Calu3 (cell line): ENCODE measurements at regions of chr3 and their contacts with region 1.

Region 1: DNA sequence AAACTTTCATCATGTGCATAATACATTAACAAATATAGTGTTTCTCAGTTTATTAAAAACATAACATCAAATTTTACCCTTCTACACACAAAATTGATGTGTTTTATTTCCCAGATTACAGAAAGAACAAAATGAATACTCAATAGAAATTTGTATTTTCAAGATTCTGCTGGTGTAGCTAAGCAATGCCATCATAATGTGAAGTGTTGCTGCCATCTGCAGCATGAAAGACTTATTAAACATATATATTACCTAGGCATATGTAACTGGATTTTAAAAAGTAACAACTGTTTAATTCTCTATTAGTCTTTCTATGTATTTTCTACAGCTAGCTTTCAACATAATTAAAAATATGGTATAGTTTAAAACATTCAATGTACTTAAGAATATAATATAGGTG is 27.5 kb downstream of the PLSCR5 start:
- DNase-seq: peak; percentile 49
- H3K4me3 Mint-ChIP-seq: no peak overlapping the region
- H3K27ac Mint-ChIP-seq: peak overlapping the region; percentile 47
- H3K4me1 Mint-ChIP-seq: peaks cover 51% of the 10 kb centered on the region
- H3K27me3 Mint-ChIP-seq: no peaks in the 10 kb centered on the region
- CTCF ChIP-seq: peak; percentile 57

Region 2: DNA sequence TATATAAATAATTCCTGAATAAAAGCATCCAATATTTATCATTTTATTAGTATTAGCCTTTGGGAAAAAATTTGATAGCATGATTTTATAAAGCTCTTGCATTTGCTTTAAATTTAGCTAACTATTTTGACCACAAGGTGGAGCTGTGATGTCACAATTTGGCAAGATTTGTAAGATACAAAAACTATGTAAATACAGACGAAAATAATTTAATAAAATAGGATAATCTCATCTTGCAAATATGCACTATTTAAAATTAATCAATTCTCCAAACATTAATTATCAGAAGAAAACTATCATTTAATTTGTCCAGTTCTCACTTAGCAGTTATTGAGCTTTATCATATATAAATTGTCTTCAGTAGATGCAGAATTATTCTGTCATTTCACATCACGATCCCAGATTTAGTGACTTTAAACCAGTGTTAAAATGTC is 512.1 kb before region 1 on chr3:
- CTCF ChIA-PET with region 1: interaction called, 3 read pairs
- intact Hi-C with region 1: loop called (anchors 5 kb)
- DNase-seq: peak; percentile 62
- H3K4me3 Mint-ChIP-seq: no peak overlapping the region
- H3K27ac Mint-ChIP-seq: no peak overlapping the region
- H3K4me1 Mint-ChIP-seq: peaks cover 8% of the 10 kb centered on the region
- H3K27me3 Mint-ChIP-seq: no peaks in the 10 kb centered on the region
- CTCF ChIP-seq: peak; percentile 74

Region 3: DNA sequence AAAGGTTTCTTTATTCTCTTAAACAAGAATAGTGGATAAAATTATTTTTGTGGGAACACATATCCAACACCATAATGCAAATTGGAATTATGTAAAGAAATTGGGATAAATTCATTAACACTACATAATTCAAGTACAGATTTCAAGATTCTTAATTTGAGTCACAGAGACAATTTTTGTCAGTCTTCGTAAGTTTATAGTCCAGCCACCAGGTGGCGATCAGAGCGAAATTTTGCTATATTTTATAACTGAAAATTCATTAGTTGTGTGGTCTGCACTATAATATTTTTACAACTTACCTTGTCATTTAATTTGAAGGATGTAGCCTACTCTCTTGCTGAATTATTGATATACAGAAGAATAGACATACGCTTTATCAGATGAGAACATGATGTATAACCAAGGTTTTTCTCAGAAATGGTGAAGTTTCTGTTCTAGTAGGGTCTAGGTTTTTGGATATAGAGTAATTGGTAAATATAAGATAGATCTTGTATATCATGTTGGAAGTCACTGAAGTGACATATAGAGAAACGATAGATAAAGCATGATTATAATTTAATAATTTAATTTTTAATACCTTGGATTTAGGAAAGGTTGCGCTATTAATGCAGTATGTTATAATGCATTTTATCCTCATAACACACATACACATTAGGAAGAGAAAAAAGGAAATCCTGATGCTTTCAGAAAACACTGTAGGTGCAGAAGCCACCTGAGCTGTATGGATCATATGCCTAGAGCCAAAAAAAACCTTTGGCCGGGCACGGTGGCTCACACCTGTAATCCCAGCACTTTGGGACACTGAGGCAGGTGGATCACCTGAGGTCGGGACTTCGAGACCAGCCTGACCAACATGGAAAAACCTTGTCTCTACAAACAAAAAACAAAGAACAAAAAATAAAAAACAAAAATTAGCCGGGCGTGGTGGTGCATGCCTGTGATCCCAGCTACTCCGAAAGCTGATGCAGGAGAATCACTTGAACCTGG is 358.5 kb before region 1 on chr3:
- CTCF ChIA-PET with region 1: interaction called, 24 read pairs
- intact Hi-C with region 1: loop called (anchors 1 kb)
- DNase-seq: peak; percentile 75
- H3K4me3 Mint-ChIP-seq: no peak overlapping the region
- H3K27ac Mint-ChIP-seq: no peak overlapping the region
- H3K4me1 Mint-ChIP-seq: peaks cover 38% of the 10 kb centered on the region
- H3K27me3 Mint-ChIP-seq: no peaks in the 10 kb centered on the region
- CTCF ChIP-seq: peak; percentile 79

Region 4: DNA sequence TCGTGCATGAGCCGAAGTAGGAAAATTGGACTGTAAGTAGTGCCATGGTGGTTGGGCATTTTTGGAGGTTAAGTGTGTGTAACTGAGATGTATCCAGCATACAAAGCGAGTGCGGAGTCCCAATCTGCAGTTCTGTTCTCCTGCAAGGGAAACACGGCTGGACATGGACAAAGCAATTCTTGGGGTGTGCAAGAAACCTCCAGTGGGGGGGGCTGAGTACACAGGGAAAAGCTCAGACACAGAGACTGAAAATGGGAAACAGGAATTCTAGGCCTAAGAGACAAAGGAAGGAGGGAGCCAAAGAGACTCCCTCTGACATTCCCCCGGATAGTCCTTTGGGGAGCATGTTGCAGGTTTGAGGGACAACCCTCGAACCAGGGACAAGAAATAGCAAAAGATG is 243.5 kb before region 1 on chr3:
- CTCF ChIA-PET with region 1: interaction called, 18 read pairs
- intact Hi-C with region 1: loop called (anchors 1 kb)
- DNase-seq: peak; percentile 77
- H3K4me3 Mint-ChIP-seq: no peak overlapping the region
- H3K27ac Mint-ChIP-seq: no peak overlapping the region
- H3K4me1 Mint-ChIP-seq: peaks cover 24% of the 10 kb centered on the region
- H3K27me3 Mint-ChIP-seq: no peaks in the 10 kb centered on the region
- CTCF ChIP-seq: peak; percentile 49

Region 5: DNA sequence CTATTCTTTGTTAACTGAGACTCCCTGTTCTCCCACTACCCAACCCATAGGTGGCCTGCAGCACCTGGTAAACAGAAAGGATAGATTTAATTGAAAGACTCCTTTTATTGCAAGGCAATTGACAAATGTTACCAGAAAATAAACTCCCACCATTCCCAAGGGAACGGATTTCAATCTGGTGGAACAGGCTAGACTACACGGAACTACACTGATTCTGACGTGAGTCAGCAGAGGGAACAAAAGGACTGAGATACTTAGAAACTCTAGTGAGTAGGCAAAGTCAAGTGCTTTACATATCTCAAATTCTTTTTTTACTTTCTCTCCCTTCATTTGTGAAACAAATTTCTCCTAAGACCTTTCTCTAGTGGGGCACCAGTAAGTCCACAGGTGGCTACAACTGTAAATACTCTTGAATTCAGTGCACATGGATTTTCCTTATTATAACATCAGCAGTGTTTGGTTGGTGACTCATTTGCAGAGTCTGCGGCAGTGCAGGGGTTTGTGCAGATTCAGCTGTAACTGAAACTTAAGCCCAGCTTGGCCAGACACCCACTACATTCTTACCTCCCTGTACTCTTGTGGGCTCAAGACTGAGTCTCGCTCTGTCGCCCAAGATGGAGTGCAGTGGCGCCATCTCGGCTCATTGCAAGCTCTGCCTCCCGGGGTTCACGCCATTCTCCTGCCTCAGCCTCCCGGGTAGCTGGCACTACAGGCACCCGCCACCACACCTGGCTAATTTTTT is 74.0 kb before region 1 on chr3:
- CTCF ChIA-PET with region 1: no interaction called
- intact Hi-C with region 1: loop called (anchors 1 kb)
- DNase-seq: peak; percentile 88
- H3K4me3 Mint-ChIP-seq: peak overlapping the region; percentile 69
- H3K27ac Mint-ChIP-seq: peak overlapping the region; percentile 100
- H3K4me1 Mint-ChIP-seq: peaks cover 58% of the 10 kb centered on the region
- H3K27me3 Mint-ChIP-seq: no peaks in the 10 kb centered on the region
- CTCF ChIP-seq: peak; percentile 21